ENCODE measurements at regions of chr7 and their contacts with region 1.

Region 1: DNA sequence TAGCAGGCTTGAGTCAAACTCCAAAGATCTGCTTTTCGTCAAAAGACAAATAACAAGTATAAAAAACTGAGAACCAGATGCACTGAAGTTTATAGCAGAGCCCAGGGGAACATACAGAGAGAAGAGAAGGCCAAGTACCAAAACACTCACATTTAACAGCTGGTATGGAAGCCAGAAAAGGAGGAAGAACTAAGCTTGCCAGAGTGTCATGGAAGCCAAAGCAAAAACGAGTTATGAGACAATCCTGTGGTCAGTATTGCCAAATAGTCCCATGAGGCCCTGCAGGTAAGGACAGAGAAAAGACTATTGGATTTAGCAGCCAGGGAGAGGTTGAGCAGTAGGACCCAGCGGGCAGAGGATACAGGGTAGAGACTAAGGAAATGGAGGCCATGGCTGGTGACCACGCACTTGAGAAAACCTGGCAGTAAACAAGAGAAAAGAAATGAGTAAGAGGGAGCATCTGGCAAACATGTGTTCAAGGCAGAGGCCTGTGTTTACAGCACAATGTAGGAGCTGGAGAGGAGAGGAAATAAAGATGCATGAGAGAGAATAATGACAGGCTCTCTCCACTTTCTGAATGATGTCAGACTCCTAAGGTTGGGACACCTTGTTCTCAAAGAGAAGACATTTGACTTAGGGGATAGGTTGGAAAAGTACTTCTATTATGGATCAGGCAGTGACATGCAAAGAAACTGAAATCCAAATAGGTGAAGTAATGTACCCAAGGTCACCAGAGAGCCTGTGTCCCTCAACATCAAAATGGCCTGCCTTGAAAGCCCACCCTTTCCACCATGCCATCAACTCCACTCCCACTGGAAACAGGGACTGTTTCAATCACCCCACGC is 9.1 kb downstream of the CREB3L2 start:
- DNase-seq: no peak

Region 2: GRCh38 chr7:137943147-137943551 is 49.6 kb before region 1 on chr7:
- in situ Hi-C with region 1: loop called (anchors 10 kb)
- DNase-seq: no peak

Region 3: DNA sequence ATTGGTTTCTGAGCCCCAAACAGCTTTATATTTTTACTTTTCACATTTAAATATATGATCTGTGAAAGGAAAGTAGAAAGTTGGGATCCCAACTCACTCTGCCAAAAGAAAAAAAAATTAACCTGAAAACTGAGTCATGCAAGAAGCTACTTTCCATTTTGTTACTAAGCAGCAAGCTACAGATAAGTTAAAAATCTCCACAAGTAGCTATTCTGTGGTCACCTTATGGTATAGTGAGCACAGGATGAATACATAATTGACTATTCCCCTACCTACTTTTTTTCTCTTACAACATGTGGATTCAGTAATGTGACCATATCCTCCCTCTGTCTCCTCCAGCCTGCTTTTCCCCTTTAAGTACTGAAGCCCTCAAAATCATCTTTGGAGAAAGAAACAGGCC is 39.4 kb after region 1 on chr7:
- in situ Hi-C with region 1: no loop called
- DNase-seq: no peak

Region 4: DNA sequence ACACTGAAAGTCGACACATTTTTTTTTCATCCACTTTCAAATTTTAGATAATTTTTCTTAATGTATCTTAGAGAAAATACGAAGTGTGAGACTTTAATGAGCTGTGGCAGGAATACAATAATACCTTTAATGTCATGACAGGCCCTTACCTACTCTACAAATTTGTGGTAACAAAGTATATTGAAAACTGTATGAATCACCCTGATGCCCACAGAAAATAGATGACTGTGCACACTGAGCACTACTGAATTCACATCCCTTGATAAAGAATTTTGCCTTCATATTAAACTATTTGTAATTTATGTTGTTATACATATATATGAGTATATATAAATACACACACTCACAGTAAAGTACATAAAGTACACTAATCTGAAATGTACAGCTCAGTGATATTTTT is 135.2 kb after region 1 on chr7:
- in situ Hi-C with region 1: no loop called
- DNase-seq: no peak

Measured in SK-MEL-5 (cell line).